Activated B cell treated with CpG ODN at 0.5 μM for 24 hours (primary cell): ENCODE measurements at regions of chr22 and their contacts with region 1.

Region 1: GRCh38 chr22:46941968-46942798 is 179.7 kb downstream of the TBC1D22A start:
- DNase-seq: no peak
- ATAC-seq: peak; percentile 61
- H3K4me3 Mint-ChIP-seq: peak overlapping the region; percentile 58
- H3K27ac Mint-ChIP-seq: peak overlapping the region; percentile 62
- H3K4me1 Mint-ChIP-seq: peaks cover 38% of the 10 kb centered on the region
- H3K27me3 Mint-ChIP-seq: no peaks in the 10 kb centered on the region
- CTCF ChIP-seq: no peak

Region 2: GRCh38 chr22:46897246-46897623 is 44.9 kb before region 1 on chr22:
- CTCF ChIA-PET with region 1: no interaction called
- POLR2A ChIA-PET with region 1: interaction called, 3 read pairs
- intact Hi-C with region 1: loop called (anchors 2 kb)
- DNase-seq: no peak
- ATAC-seq: peak; percentile 37
- H3K4me3 Mint-ChIP-seq: no peak overlapping the region
- H3K27ac Mint-ChIP-seq: no peak overlapping the region
- H3K4me1 Mint-ChIP-seq: peaks cover 29% of the 10 kb centered on the region
- H3K27me3 Mint-ChIP-seq: no peaks in the 10 kb centered on the region
- CTCF ChIP-seq: no peak

Region 3: GRCh38 chr22:46969491-46969890 is 27.3 kb after region 1 on chr22:
- CTCF ChIA-PET with region 1: no interaction called
- POLR2A ChIA-PET with region 1: no interaction called
- intact Hi-C with region 1: loop called (anchors 2 kb)
- DNase-seq: peak; percentile 34
- ATAC-seq: peak; percentile 93
- H3K4me3 Mint-ChIP-seq: no peak overlapping the region
- H3K27ac Mint-ChIP-seq: peak overlapping the region; percentile 39
- H3K4me1 Mint-ChIP-seq: peaks cover 33% of the 10 kb centered on the region
- H3K27me3 Mint-ChIP-seq: no peaks in the 10 kb centered on the region
- CTCF ChIP-seq: no peak

Region 4: GRCh38 chr22:47111626-47112561 is 169.7 kb after region 1 on chr22:
- CTCF ChIA-PET with region 1: no interaction called
- POLR2A ChIA-PET with region 1: no interaction called
- intact Hi-C with region 1: no loop called
- DNase-seq: no peak
- ATAC-seq: no peak
- H3K4me3 Mint-ChIP-seq: no peak overlapping the region
- H3K27ac Mint-ChIP-seq: no peak overlapping the region
- H3K4me1 Mint-ChIP-seq: no peaks in the 10 kb centered on the region
- H3K27me3 Mint-ChIP-seq: no peaks in the 10 kb centered on the region
- CTCF ChIP-seq: no peak